ENCODE measurements at regions of chr12 and their contacts with region 1.

Region 1: DNA sequence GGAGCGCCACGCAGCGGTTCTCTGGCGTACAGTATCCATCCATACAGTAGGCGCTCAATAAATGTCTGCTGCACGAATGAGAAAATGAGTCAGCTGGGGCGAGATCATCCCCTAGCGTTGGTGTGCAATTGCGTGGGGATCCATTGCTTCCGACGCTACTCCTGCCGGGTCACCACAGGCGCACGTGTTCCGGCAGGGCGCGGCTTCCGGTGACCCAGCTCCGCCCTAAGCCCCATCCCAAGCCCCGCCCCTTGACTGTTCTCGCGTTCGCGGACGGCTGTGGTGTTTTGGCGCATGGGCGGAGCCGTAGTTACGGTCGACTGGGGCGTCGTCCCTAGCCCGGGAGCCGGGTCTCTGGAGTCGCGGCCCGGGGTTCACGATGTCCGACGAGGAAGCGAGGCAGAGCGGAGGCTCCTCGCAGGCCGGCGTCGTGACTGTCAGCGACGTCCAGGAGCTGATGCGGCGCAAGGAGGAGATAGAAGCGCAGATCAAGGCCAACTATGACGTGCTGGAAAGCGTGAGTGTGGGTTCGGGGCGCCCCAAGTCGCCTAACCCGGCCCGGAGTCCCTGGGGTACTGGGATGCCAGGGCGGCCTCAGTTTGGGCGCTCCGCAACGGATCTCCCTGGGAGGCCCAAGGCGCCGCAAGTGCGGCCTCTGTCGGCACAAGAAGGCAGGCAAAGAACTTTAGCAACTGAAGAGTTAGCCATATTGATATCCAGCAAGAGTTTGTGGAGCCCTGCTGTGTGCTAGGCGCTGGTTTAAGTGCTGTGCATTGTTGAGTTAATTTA is at the start of gene PSMD9:
- DNase-seq: peak; percentile 95 to 99
- ATAC-seq: peak; percentile 94 to 99 (median 95)
- H3K4me3 ChIP-seq: peak within 1 kb of the TSS; percentile 87
- H3K4me3 Mint-ChIP-seq: peak within 1 kb of the TSS; percentile 100
- H3K27ac ChIP-seq: peak within 1 kb of the TSS; percentile 93
- H3K27ac Mint-ChIP-seq: peak within 1 kb of the TSS; percentile 99
- H3K4me1 ChIP-seq: peaks cover 24% of the 10 kb centered on the region
- H3K4me1 Mint-ChIP-seq: peaks cover 26 to 32% of the 10 kb centered on the region in 2 donors
- H3K27me3 ChIP-seq: no peaks in the 10 kb centered on the region
- H3K27me3 Mint-ChIP-seq: no peaks in the 10 kb centered on the region
- CTCF ChIP-seq: peak; percentile 54
- total RNA-seq, gene PSMD9: 32.0 to 47.6 (median 47.2) TPM

Region 2: DNA sequence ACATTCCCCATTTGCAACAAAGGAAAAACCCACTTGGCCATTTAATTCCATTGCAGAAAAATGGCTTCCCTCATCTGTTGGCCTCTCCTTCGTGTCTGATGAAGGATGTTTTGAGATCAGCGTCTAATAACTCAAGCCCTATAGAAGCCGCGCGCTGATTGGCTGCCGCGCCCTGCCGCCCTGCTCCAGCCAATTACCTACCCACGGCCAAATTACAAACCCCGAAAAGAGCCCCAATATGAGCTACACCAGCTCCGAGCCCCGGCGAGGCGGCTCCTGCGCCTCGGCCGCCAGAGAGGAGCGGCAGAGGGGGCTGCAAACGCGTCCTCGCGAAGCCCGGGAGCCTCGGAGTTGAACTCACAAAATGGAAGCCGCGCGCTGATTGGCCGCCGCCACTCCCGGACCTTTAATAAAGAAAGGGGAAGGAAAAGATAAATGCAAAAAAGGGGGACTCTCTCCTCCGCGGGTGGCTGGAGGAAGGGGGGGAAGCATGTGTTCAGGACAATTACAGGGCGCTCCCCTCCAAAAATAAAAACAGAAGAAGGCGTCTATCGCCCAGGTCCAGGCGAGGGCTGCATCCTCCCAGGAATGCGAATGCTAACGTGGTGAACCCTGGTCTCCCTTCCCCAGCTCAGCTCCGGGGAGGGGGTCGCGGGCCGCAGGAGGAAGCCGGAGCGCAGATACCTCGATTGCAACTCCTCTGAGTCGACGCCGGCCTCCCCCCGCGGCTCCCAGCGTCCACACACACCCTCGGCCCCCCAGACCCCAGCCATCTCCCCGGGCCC is 85.6 kb before region 1 on chr12:
- intact Hi-C with region 1: loop called (anchors 2 kb)
- DNase-seq: peak; percentile 85 to 94
- ATAC-seq: peak; percentile 52 to 69 (median 59)
- H3K4me3 ChIP-seq: peak overlapping the region; percentile 57
- H3K4me3 Mint-ChIP-seq: peak overlapping the region; percentile 100
- H3K27ac ChIP-seq: peak overlapping the region; percentile 97
- H3K27ac Mint-ChIP-seq: peak overlapping the region; percentile 100
- H3K4me1 ChIP-seq: peaks cover 60% of the 10 kb centered on the region
- H3K4me1 Mint-ChIP-seq: peaks cover 44 to 59% of the 10 kb centered on the region in 2 donors
- H3K27me3 ChIP-seq: no peaks in the 10 kb centered on the region
- H3K27me3 Mint-ChIP-seq: no peaks in the 10 kb centered on the region
- CTCF ChIP-seq: no peak

Region 3: DNA sequence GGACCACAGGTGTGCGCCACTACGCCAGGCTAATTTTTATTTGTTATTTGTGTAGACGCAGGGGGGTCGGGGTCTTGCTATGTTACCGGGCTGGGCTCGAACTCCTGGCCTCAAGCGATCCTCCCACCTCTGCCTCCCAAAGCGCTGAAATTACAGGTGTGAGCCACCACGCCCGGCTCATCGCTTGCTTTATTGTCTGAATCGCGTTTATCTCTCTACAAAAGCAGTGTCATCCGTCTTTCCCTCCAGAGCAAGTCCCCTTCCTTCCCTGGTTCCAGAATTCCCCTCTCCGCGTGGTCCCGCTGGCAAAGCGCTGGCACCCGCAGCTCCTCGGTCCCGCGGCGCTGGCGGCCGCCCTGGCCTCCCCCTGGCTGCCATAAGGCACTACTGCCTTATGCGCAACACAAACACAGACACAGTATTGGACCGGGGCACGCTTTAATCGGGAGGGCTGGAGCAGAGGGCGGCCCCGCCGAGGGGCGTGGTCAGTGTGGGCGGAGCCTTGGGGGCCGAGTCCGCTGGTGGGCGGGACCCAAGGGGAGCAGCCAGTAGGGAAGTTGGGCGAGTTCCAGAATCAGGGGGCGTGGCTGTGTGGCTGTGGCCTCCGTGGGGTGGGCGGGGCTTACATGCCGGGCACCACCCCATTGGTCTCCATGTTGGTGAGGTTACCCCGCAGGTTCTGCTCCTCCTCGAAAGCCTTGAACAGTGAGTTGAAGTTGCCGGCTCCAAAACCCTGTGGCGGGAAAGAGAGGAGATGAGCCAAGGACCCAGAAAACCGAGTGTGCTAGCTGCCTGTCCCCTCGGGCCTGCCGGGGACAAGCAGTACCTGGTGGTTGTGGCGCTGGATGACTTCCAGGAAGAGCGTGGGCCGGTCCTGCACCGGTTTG is 49.3 kb before region 1 on chr12:
- intact Hi-C with region 1: loop called (anchors 1 kb)
- DNase-seq: peak; percentile 99 to 100
- ATAC-seq: peak; percentile 98 to 100 (median 98)
- H3K4me3 ChIP-seq: peak overlapping the region; percentile 59
- H3K4me3 Mint-ChIP-seq: peak overlapping the region; percentile 91
- H3K27ac ChIP-seq: peak overlapping the region; percentile 27
- H3K27ac Mint-ChIP-seq: peak overlapping the region; percentile 53 to 91
- H3K4me1 ChIP-seq: peaks cover 17% of the 10 kb centered on the region
- H3K4me1 Mint-ChIP-seq: peaks cover 12 to 19% of the 10 kb centered on the region in 2 donors
- H3K27me3 ChIP-seq: no peaks in the 10 kb centered on the region
- H3K27me3 Mint-ChIP-seq: no peaks in the 10 kb centered on the region
- CTCF ChIP-seq: no peak

Region 4: GRCh38 chr12:121917979-121918678 is 29.5 kb after region 1 on chr12 and contains the start of gene CFAP251:
- intact Hi-C with region 1: loop called (anchors 1 kb)
- DNase-seq: peak; percentile 95 to 98
- ATAC-seq: peak; percentile 98 to 99 (median 98)
- H3K4me3 ChIP-seq: peak within 1 kb of the TSS; percentile 35
- H3K4me3 Mint-ChIP-seq: peak within 1 kb of the TSS; percentile 88
- H3K27ac ChIP-seq: peak within 1 kb of the TSS; percentile 50
- H3K27ac Mint-ChIP-seq: peak within 1 kb of the TSS; percentile 88 to 91
- H3K4me1 ChIP-seq: peaks cover 13% of the 10 kb centered on the region
- H3K4me1 Mint-ChIP-seq: peaks cover 9 to 12% of the 10 kb centered on the region in 2 donors
- H3K27me3 ChIP-seq: no peaks in the 10 kb centered on the region
- H3K27me3 Mint-ChIP-seq: no peaks in the 10 kb centered on the region
- CTCF ChIP-seq: peak; percentile 74
- total RNA-seq, gene CFAP251: 0.59 to 0.80 (median 0.59) TPM

Measured in natural killer cell (primary cell).